Common myeloid progenitor, CD34-positive (primary cell): ENCODE measurements at regions of chr11 and their contacts with region 1.

Region 1: GRCh38 chr11:114036156-114036811 is 23.2 kb upstream of the ZBTB16 start:
- DNase-seq: peak; percentile 73 to 76 (median 75)
- H3K4me3 ChIP-seq: peak overlapping the region in 4 of 7 experiments; percentile 6 to 66 (median 37)
- H3K27ac ChIP-seq: no peak overlapping the region
- H3K4me1 ChIP-seq: peaks cover 0 to 9% (median 6%) of the 10 kb centered on the region in 4 experiments
- H3K27me3 ChIP-seq: peaks cover 0 to 4% (median 0%) of the 10 kb centered on the region in 5 experiments

Region 2: DNA sequence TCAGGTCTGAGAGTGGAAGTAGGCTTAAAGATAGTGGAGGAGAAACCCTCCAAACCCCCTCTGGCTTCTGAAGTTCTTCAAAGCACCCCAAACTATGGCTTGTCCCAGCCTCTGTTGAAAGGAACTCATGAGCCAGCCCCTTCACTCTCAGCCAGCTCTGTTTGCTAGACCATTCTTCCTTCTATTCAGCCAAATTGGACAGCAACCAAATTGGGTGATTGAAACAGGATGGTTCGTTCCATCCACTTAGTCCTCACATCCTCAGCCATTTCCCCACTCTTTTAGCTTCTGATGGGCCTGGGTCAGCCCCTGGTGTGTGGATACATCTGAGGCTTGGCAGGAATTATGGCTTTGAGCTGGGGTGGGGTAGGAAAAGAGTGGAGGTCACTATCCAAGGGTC is 56.9 kb before region 1 on chr11:
- CTCF ChIA-PET with region 1: no interaction called
- POLR2A ChIA-PET with region 1: no interaction called
- DNase-seq: no peak
- H3K4me3 ChIP-seq: no peak overlapping the region
- H3K27ac ChIP-seq: no peak overlapping the region
- H3K4me1 ChIP-seq: peaks cover 2 to 6% (median 6%) of the 10 kb centered on the region in 4 experiments
- H3K27me3 ChIP-seq: peaks cover 0 to 8% (median 4%) of the 10 kb centered on the region in 5 experiments

Region 3: GRCh38 chr11:114174712-114175495 is 138.6 kb after region 1 on chr11:
- CTCF ChIA-PET with region 1: interaction called, 103 read pairs
- POLR2A ChIA-PET with region 1: no interaction called
- DNase-seq: no peak
- H3K4me3 ChIP-seq: no peak overlapping the region
- H3K27ac ChIP-seq: no peak overlapping the region
- H3K4me1 ChIP-seq: peaks cover 11 to 46% (median 32%) of the 10 kb centered on the region in 4 experiments
- H3K27me3 ChIP-seq: no peaks in the 10 kb centered on the region

Region 4: GRCh38 chr11:114256176-114256966 is 220.1 kb after region 1 on chr11:
- CTCF ChIA-PET with region 1: interaction called, 168 read pairs
- POLR2A ChIA-PET with region 1: interaction called, 11 read pairs
- DNase-seq: no peak
- H3K4me3 ChIP-seq: no peak overlapping the region
- H3K27ac ChIP-seq: no peak overlapping the region
- H3K4me1 ChIP-seq: peaks cover 0 to 32% (median 23%) of the 10 kb centered on the region in 4 experiments
- H3K27me3 ChIP-seq: no peaks in the 10 kb centered on the region